MCF 10A (cell line): ENCODE measurements at regions of chr9 and their contacts with region 1.

Region 1: GRCh38 chr9:133792721-133793470 is 54.7 kb upstream of the SARDH start:
- DNase-seq: peak; percentile 68
- H3K4me3 Mint-ChIP-seq: no peak overlapping the region
- H3K27ac Mint-ChIP-seq: no peak overlapping the region
- H3K4me1 Mint-ChIP-seq: peaks cover 11% of the 10 kb centered on the region
- H3K27me3 Mint-ChIP-seq: no peaks in the 10 kb centered on the region
- CTCF ChIP-seq: peak; percentile 90

Region 2: DNA sequence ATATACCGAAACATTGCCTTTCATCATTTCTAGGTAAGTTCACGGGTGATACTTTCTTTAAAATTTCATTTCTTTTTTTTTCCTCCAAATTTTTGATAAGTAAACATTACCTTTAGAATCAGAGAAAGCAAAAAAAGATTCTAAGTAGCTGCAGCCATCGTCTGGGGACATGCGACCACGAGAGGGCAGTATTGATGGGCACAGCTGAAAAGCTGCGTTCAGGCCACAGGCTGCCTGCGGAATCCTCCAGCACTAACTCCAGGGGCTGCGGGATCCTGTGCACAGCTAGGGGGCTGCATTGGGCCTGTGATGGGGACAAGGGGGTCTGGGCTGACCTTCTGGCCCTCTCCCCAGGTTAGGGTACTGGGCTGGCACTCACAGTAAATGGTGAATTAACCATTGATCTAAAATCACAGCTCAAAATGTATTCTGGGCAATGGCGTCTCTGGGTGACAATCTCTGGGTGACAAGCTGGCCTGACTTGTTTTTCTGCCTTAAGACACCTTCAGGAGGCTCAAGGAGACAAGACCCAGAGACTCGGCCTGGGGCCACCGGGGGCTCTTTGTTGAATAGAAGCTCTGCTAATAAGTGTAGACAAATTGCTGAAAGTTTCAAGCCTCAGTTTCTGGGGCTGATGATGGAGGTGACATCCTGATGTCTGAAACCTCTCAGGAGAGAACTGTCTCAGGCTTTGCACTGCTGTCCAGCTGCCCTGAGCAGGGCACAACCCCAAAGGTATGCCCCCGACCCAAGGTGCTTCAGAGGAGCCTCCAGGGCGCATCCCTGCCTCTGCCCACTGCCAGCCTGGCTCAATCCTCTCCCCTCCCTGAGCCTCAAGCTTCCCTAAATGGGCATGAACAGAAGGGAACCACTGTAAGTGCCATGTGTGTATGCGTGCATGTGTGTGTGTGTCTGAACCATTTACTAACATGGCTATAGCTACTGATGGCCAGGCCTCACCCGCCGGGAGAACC is 10.5 kb before region 1 on chr9:
- CTCF ChIA-PET with region 1: interaction called, 15 read pairs
- POLR2A ChIA-PET with region 1: no interaction called
- intact Hi-C with region 1: no loop called
- DNase-seq: peak; percentile 55
- H3K4me3 Mint-ChIP-seq: no peak overlapping the region
- H3K27ac Mint-ChIP-seq: no peak overlapping the region
- H3K4me1 Mint-ChIP-seq: no peaks in the 10 kb centered on the region
- H3K27me3 Mint-ChIP-seq: no peaks in the 10 kb centered on the region
- CTCF ChIP-seq: peak; percentile 64

Region 3: GRCh38 chr9:133821601-133822429 is 28.9 kb after region 1 on chr9:
- CTCF ChIA-PET with region 1: no interaction called
- POLR2A ChIA-PET with region 1: no interaction called
- intact Hi-C with region 1: no loop called
- DNase-seq: no peak
- H3K4me3 Mint-ChIP-seq: no peak overlapping the region
- H3K27ac Mint-ChIP-seq: no peak overlapping the region
- H3K4me1 Mint-ChIP-seq: no peaks in the 10 kb centered on the region
- H3K27me3 Mint-ChIP-seq: no peaks in the 10 kb centered on the region
- CTCF ChIP-seq: no peak